Activated B cell treated with CpG ODN at 0.5 μM for 24 hours (primary cell): ENCODE measurements at regions of chr11 and their contacts with region 1.

Region 1: DNA sequence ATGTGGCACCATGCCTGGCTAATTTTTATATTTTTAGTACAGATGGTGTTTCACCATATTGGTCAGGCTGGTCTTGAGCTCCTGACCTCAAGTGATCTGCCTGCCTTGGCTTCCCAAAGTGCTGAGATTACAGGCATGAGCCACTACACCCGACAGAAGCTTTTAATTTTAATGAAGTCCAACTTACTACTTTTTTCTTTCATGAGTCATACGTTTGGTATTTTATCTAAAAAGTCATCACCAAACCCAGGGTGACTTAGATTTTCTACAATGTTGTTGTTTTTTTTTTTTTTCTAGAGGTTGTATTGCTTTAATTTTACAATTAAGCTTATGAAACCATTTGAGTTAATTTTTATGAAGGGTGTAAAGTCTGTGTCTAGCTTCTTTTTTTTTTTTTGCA is 34.9 kb downstream of the JRKL start:
- DNase-seq: no peak
- ATAC-seq: no peak
- H3K4me3 Mint-ChIP-seq: no peak overlapping the region
- H3K27ac Mint-ChIP-seq: no peak overlapping the region
- H3K4me1 Mint-ChIP-seq: no peaks in the 10 kb centered on the region
- H3K27me3 Mint-ChIP-seq: peaks cover 32% of the 10 kb centered on the region
- CTCF ChIP-seq: no peak

Region 2: GRCh38 chr11:94623120-94623735 is 1801.5 kb before region 1 on chr11:
- CTCF ChIA-PET with region 1: interaction called, 3 read pairs
- POLR2A ChIA-PET with region 1: no interaction called
- intact Hi-C with region 1: loop called (anchors 1 kb)
- DNase-seq: no peak
- ATAC-seq: peak; percentile 58
- H3K4me3 Mint-ChIP-seq: no peak overlapping the region
- H3K27ac Mint-ChIP-seq: no peak overlapping the region
- H3K4me1 Mint-ChIP-seq: no peaks in the 10 kb centered on the region
- H3K27me3 Mint-ChIP-seq: peaks cover 14% of the 10 kb centered on the region
- CTCF ChIP-seq: no peak

Region 3: DNA sequence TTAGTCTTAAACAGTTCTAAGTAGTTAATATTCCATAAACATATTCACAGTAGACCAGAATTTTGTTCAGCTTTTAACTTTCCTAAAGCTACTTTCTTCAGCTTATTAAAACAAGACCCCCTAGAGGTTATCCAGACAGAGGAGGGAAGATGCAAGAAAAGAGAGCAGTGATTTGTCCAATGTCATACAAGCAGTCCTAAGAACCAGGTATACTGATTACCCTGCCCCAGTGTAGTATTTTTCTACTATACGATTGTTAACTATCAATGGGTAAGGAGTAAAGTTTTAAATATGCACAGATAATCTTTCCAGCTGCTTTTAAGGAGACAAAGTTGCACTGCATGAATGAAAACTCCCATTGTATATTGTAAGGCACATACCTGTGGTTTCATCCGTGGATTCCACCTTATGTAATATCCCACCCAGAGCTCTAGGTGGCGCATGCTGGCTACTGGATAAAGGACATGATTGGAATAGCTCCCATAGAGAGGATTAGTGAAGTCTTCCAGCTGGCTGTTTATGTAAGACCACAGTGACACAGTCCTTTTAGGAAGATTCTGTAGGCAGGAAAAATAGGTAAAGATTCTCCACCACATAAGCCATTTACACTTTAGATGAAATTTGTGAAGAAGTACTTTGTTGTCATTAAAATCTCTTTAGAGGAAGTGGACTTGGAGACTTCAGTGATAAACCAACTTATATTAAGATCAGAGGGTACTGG is 588.8 kb before region 1 on chr11:
- CTCF ChIA-PET with region 1: interaction called, 36 read pairs
- POLR2A ChIA-PET with region 1: no interaction called
- intact Hi-C with region 1: loop called (anchors 1 kb)
- DNase-seq: no peak
- ATAC-seq: peak; percentile 87
- H3K4me3 Mint-ChIP-seq: no peak overlapping the region
- H3K27ac Mint-ChIP-seq: no peak overlapping the region
- H3K4me1 Mint-ChIP-seq: peaks cover 2% of the 10 kb centered on the region
- H3K27me3 Mint-ChIP-seq: no peaks in the 10 kb centered on the region
- CTCF ChIP-seq: no peak

Region 4: GRCh38 chr11:95849087-95849825 is 575.4 kb before region 1 on chr11:
- CTCF ChIA-PET with region 1: interaction called, 10 read pairs
- POLR2A ChIA-PET with region 1: no interaction called
- intact Hi-C with region 1: loop called (anchors 1 kb)
- DNase-seq: no peak
- ATAC-seq: peak; percentile 52
- H3K4me3 Mint-ChIP-seq: no peak overlapping the region
- H3K27ac Mint-ChIP-seq: no peak overlapping the region
- H3K4me1 Mint-ChIP-seq: no peaks in the 10 kb centered on the region
- H3K27me3 Mint-ChIP-seq: no peaks in the 10 kb centered on the region
- CTCF ChIP-seq: no peak

Region 5: DNA sequence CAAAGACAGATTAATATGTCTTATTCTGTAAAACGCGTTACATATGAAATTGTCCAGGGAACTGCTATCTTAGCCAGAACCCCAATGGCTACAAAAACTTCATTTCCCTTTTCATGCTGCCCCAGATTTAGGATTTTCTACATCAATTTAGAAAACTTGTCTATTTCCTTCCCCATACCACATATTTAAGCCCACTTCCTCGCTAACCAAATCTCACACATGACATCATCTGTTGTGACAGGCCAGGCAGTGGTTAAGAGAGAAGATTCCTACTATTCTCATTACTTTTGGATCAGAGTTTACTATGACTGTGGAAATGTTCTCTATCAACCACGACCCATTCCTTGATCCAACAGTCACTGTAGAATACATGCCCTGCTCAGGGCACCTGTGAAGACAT is 50.9 kb before region 1 on chr11:
- CTCF ChIA-PET with region 1: no interaction called
- POLR2A ChIA-PET with region 1: no interaction called
- intact Hi-C with region 1: no loop called
- DNase-seq: no peak
- ATAC-seq: no peak
- H3K4me3 Mint-ChIP-seq: no peak overlapping the region
- H3K27ac Mint-ChIP-seq: no peak overlapping the region
- H3K4me1 Mint-ChIP-seq: no peaks in the 10 kb centered on the region
- H3K27me3 Mint-ChIP-seq: no peaks in the 10 kb centered on the region
- CTCF ChIP-seq: no peak